ENCODE measurements at regions of chr4 and their contacts with region 1.

Region 1: DNA sequence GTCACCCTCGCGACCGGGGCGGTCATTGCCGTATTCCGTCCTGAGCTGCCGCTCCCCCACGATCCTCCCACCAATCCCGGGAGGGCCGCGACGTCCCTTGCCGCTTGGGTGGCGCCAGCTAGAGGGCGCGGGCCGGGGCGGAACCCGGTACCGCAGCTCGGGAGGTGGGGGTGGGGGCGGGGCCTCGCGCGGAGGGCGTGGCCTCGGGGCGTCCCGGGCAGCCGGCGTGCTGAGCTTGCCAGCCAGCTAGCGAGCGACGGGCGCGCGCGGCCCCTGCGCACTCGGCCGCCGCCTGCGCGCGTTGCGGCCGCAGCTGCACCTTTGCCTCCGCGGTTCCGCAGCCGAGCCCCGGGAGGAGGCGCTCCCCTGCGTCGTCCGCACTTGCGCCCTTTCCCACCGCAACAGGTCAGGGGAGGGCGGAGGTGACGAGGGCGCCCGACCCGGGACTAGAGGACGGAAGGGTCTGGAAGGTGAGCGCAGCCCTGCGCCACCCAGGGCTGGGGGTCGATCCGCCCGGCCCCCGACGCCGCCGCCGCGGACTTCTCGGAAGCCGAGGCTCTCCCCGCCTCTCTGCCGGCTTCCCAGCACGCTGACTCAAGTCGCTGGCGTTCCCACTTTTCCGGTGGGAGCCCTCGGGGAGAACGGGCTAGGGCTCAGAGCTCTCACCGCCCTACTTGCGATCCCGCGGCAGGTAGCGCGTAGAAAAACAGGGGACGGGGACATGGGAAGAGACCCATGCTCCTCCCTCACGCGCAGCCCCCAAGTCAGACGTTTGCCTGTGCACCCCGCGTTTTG is at the start of gene AFF1:
- DNase-seq: peak; percentile 94
- H3K4me3 Mint-ChIP-seq: peak within 1 kb of the TSS; percentile 90
- H3K27ac Mint-ChIP-seq: peak within 1 kb of the TSS; percentile 95
- H3K4me1 Mint-ChIP-seq: peaks cover 49% of the 10 kb centered on the region
- H3K27me3 Mint-ChIP-seq: no peaks in the 10 kb centered on the region
- total RNA-seq, gene AFF1: 46.1 to 50.8 TPM

Region 2: GRCh38 chr4:86957214-86957613 is 22.2 kb after region 1 on chr4:
- CTCF ChIA-PET with region 1: interaction called, 8 read pairs
- POLR2A ChIA-PET with region 1: interaction called, 5 read pairs
- intact Hi-C with region 1: loop called (anchors 1 kb)
- DNase-seq: no peak
- H3K4me3 Mint-ChIP-seq: no peak overlapping the region
- H3K27ac Mint-ChIP-seq: peak overlapping the region; percentile 55
- H3K4me1 Mint-ChIP-seq: peaks cover 49% of the 10 kb centered on the region
- H3K27me3 Mint-ChIP-seq: no peaks in the 10 kb centered on the region

Region 3: DNA sequence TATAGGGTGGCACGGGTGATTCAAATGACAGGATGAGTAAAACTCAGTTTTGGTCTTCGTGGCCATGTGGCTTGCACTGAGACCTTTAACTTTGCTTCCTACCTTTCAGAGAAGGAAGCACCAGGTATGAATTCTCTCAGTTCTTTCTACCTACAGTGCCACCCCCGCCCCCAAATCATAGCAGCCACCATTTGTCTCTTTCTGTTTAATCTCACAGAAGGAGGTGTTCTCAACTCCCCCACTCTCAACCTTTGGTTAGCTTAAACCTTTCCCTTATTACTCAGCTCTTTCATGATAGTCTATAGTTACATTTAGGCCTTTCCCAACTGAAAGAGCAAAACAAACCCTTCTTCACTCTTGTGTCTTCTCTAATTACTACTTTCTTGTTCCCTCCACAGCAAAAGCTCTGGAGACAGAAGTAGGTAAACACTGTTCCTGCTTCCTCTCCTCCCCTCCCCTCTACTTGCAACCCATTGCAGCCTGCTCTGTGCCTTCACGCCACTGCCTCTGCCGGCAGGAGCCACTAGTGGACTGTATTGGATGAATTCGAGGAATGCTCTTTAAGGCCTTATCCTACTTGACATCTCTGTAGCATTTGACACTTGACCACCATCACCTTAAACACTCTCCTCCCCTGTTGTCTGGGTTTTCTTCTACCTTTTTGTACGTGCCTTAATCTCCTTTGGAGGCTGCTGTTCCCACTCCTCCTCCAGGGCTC is 123.5 kb after region 1 on chr4:
- CTCF ChIA-PET with region 1: interaction called, 13 read pairs
- POLR2A ChIA-PET with region 1: interaction called, 10 read pairs
- intact Hi-C with region 1: loop called (anchors 1 kb)
- DNase-seq: peak; percentile 81
- H3K4me3 Mint-ChIP-seq: peak overlapping the region; percentile 17
- H3K27ac Mint-ChIP-seq: peak overlapping the region; percentile 78
- H3K4me1 Mint-ChIP-seq: peaks cover 70% of the 10 kb centered on the region
- H3K27me3 Mint-ChIP-seq: no peaks in the 10 kb centered on the region

Region 4: DNA sequence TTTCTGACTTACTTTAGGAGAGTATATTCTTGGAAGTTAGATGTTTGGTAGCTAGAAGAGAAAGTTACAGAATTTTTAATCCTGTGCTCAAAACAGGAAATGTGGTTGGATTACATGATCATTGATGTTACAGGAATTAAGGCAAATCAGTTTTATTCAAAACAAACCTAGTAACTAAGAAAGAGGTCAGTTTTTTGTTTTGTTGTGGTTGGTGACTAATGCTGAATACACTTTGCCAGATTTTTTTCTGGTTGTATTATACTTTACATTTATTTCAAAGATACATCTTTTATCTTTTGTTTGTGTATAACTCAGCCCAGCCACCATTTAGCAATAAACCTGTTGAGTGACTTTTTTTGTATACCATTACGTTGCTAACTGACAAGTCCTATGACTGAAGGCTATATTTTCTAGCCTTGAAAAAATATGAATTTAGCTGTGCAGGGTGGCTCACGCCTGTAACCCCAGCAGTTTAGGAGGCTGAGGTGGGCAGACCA is 168.8 kb after region 1 on chr4:
- CTCF ChIA-PET with region 1: interaction called, 8 read pairs
- POLR2A ChIA-PET with region 1: interaction called, 8 read pairs
- intact Hi-C with region 1: loop called (anchors 2 kb)
- DNase-seq: no peak
- H3K4me3 Mint-ChIP-seq: peak overlapping the region; percentile 57
- H3K27ac Mint-ChIP-seq: peak overlapping the region; percentile 84
- H3K4me1 Mint-ChIP-seq: peaks cover 72% of the 10 kb centered on the region
- H3K27me3 Mint-ChIP-seq: no peaks in the 10 kb centered on the region

Region 5: DNA sequence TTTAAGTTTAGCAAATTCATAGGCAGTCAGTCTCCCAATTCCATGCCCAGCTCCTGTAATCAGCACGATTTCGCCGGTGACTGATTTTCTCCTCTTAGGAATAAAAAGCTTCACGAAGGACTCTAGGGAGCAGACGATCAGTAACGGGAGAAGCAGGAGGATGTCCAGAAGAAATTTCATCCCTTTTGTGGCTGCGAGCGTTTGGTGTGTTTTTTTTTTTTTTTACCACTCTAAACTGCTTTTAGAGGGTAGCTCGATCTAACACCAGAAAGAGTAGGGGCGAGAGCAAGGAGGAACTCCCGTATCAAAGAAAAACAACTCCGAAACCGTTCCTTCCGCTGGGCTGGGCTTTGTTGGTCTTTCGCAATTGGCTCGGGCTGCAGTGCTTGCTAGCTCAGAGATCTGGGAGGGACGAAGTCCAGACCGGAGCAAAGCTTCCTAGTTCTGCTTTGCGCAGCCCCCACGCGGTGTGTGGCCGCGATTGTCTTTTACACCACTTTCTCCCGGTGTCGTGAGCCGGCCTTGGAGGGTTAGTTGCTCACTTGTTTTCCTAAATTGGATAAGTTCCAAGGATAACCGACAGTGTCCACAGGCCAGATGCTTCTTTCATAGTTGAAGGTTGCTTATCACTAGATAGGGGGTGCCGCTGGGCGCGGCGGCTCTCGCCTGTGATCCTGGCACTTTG is 456.1 kb after region 1 on chr4 and contains the start of gene HSD17B11:
- CTCF ChIA-PET with region 1: no interaction called
- POLR2A ChIA-PET with region 1: no interaction called
- intact Hi-C with region 1: loop called (anchors 10 kb)
- DNase-seq: peak; percentile 89
- H3K4me3 Mint-ChIP-seq: peak within 1 kb of the TSS; percentile 90
- H3K27ac Mint-ChIP-seq: peak within 1 kb of the TSS; percentile 78
- H3K4me1 Mint-ChIP-seq: peaks cover 31% of the 10 kb centered on the region
- H3K27me3 Mint-ChIP-seq: no peaks in the 10 kb centered on the region
- total RNA-seq, gene HSD17B11: 19.8 to 20.8 TPM